ENCODE measurements at regions of chr1 and their contacts with region 1.

Region 1: GRCh38 chr1:90721210-90722194 is 4.4 kb upstream of the BARHL2 start:
- DNase-seq: peak; percentile 73
- CTCF ChIP-seq: peak; percentile 89

Region 2: DNA sequence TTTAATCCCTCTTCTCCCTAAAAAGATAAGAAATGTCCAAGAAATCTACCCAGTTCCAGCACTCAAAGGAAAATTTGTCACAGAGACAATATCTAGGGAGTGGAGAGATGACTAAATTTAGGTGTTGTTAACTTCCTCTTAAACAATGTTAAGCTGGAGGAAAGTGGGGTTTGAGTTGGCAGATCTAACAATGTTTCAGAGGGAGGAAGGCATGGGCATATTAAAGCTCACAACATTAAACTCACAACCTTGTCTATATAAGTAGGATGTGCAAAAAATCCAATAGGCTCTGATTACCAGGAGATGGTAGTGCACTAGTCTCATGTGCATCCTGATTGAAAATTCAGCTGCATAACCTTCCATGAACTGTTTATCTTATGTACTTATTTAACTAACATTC is 194.5 kb before region 1 on chr1:
- in situ Hi-C with region 1: no loop called
- DNase-seq: no peak
- CTCF ChIP-seq: no peak

Region 3: DNA sequence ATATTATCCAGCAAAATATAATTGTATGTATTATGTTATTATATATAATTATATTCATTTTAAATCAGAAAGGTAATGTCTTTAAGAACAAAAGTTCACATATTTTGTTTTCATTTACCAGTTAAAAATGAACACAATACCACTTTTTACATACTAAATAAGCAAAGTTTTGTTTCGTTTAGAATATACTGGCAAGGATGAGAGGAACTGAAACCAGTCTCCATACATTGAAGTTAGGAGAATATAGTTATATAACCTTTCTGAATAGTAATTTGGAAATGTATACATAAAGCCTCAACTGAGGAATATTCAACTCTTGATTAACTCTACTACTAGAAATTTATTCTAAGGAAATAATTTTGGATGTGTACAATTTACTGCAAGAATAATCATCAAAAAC is 189.9 kb after region 1 on chr1:
- in situ Hi-C with region 1: no loop called
- DNase-seq: no peak
- CTCF ChIP-seq: no peak

Region 4: DNA sequence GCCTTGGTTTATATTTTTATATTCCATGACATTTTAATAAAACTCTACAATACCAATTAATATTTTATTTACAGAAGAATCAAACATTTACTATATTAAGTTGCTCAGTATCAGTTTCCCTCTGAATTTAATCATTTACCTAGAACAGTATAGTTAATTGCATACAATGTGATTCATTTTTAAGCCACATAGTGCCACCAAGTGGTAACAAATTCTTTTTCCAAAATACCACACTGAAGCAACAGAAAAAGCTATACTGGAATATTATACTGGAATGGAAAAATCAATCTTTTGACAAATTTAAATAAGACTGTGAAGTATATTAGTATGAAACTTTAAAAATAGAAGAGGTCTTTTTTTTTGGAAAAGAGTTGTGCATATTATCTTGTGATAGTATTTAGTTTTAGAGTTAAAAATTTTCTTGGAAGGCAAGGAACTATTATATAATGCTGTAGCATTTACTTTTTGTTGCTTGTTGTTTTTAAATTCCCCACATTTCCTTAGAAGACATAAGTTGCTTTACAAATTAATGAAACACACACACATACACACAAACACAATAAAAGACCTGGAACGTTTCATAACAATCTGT is 243.0 kb after region 1 on chr1:
- in situ Hi-C with region 1: loop called (anchors 10 kb)
- DNase-seq: no peak
- CTCF ChIP-seq: peak; percentile 7

Region 5: GRCh38 chr1:91165033-91165654 is 443.6 kb after region 1 on chr1:
- in situ Hi-C with region 1: loop called (anchors 10 kb)
- DNase-seq: peak; percentile 79
- CTCF ChIP-seq: peak; percentile 97

Measured in GM13976 (cell line).